ENCODE measurements at regions of chr2 and their contacts with region 1.

Region 1: DNA sequence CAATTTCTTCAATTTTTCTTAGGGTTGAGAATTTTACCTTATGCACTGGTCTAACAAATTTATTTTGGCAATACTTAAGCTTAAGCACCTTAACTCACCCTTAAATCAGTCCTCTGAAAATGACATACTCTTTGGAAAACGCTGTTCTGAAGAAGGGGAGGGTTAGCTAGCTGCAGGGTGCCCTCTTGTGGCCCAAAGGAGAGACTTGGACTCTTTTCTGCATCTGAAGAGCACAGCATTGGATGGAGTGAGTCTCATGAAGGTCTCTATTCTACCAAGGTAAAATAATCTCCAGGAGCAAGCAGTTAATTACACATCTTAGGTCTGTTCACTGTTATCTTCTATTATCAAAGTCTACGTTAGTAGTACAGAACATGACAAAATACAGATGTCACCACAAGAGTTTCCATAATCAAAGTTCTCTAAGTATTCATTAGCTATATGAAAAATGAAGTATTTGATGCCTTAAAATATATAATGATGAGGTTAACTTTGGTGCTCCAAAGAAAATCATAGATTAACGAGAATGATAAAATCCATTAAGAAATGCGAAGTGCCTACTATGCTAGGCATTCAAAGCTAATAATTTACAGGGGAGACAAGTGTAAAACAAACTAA is 24.4 kb downstream of the PUM2 start:
- DNase-seq: peak; percentile 72
- ATAC-seq: peak; percentile 69
- H3K4me3 Mint-ChIP-seq: no peak overlapping the region
- H3K27ac Mint-ChIP-seq: peak overlapping the region; percentile 71
- H3K4me1 Mint-ChIP-seq: peaks cover 81% of the 10 kb centered on the region
- H3K27me3 Mint-ChIP-seq: no peaks in the 10 kb centered on the region
- CTCF ChIP-seq: peak; percentile 73

Region 2: GRCh38 chr2:20292984-20293383 is 33.3 kb before region 1 on chr2:
- CTCF ChIA-PET with region 1: interaction called, 14 read pairs
- POLR2A ChIA-PET with region 1: no interaction called
- intact Hi-C with region 1: no loop called
- DNase-seq: no peak
- ATAC-seq: no peak
- H3K4me3 Mint-ChIP-seq: no peak overlapping the region
- H3K27ac Mint-ChIP-seq: no peak overlapping the region
- H3K4me1 Mint-ChIP-seq: peaks cover 11% of the 10 kb centered on the region
- H3K27me3 Mint-ChIP-seq: no peaks in the 10 kb centered on the region
- CTCF ChIP-seq: no peak

Region 3: GRCh38 chr2:20343128-20343527 is 16.9 kb after region 1 on chr2:
- CTCF ChIA-PET with region 1: interaction called, 49 read pairs
- POLR2A ChIA-PET with region 1: interaction called, 6 read pairs
- intact Hi-C with region 1: no loop called
- DNase-seq: peak; percentile 34
- ATAC-seq: peak; percentile 72
- H3K4me3 Mint-ChIP-seq: no peak overlapping the region
- H3K27ac Mint-ChIP-seq: no peak overlapping the region
- H3K4me1 Mint-ChIP-seq: peaks cover 78% of the 10 kb centered on the region
- H3K27me3 Mint-ChIP-seq: no peaks in the 10 kb centered on the region
- CTCF ChIP-seq: no peak

Region 4: DNA sequence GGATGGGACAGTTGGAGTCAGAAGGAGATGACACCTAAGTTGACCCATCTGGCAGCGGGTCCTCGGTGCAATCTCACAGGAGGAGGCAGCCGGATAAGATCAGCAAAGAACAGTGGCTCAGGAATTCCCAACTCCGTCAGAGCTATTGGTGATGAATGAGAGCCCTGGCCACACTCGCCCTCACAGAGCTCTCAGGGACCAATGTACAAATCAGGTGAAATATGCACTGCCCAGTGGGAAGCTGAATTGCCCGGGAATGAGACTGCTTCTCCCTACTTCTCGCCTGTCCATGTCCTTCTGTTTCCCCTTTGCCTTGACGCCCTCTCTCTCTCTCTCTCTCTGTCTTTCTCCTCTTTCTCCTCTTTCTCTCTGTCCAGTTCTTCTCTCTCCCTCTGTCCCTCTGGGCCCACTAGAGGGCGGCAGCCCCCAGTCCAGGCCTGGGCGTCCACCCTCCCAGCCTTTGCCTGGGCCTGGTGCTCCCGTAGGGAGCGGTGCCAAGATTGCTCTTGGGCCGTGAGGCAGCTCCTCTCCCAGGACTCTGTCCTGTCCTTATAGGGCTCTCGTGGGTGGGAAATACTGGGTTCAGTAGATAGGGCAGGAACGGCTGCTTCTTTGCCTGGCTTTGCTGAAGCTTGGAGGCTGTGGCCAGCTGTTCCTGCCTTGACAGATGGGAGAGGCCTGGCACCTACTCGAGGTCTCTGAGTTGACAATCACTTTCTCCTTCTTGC is 52.7 kb after region 1 on chr2:
- CTCF ChIA-PET with region 1: interaction called, 10 read pairs
- POLR2A ChIA-PET with region 1: no interaction called
- intact Hi-C with region 1: no loop called
- DNase-seq: no peak
- ATAC-seq: no peak
- H3K4me3 Mint-ChIP-seq: no peak overlapping the region
- H3K27ac Mint-ChIP-seq: no peak overlapping the region
- H3K4me1 Mint-ChIP-seq: no peaks in the 10 kb centered on the region
- H3K27me3 Mint-ChIP-seq: peaks cover 4% of the 10 kb centered on the region
- CTCF ChIP-seq: peak; percentile 22

Region 5: GRCh38 chr2:20424300-20425290 is 98.3 kb after region 1 on chr2:
- CTCF ChIA-PET with region 1: interaction called, 10 read pairs
- POLR2A ChIA-PET with region 1: no interaction called
- intact Hi-C with region 1: no loop called
- DNase-seq: peak; percentile 41
- ATAC-seq: peak; percentile 63
- H3K4me3 Mint-ChIP-seq: no peak overlapping the region
- H3K27ac Mint-ChIP-seq: peak overlapping the region; percentile 17
- H3K4me1 Mint-ChIP-seq: peaks cover 14% of the 10 kb centered on the region
- H3K27me3 Mint-ChIP-seq: no peaks in the 10 kb centered on the region
- CTCF ChIP-seq: no peak